ENCODE measurements at regions of chr12 and their contacts with region 1.

Region 1: GRCh38 chr12:57517187-57517586 is 3.1 kb downstream of the DDIT3 start:
- DNase-seq: no peak
- H3K4me3 Mint-ChIP-seq: no peak overlapping the region
- H3K27ac Mint-ChIP-seq: peak overlapping the region; percentile 60
- H3K4me1 Mint-ChIP-seq: peaks cover 38% of the 10 kb centered on the region
- H3K27me3 Mint-ChIP-seq: no peaks in the 10 kb centered on the region

Region 2: GRCh38 chr12:57498132-57498502 is 19.1 kb before region 1 on chr12:
- CTCF ChIA-PET with region 1: interaction called, 16 read pairs
- POLR2A ChIA-PET with region 1: no interaction called
- DNase-seq: no peak
- H3K4me3 Mint-ChIP-seq: no peak overlapping the region
- H3K27ac Mint-ChIP-seq: no peak overlapping the region
- H3K4me1 Mint-ChIP-seq: no peaks in the 10 kb centered on the region
- H3K27me3 Mint-ChIP-seq: no peaks in the 10 kb centered on the region

Measured in activated CD4-positive, alpha-beta T cell treated with anti-CD3 and anti-CD28 coated beads, Interleukin-2, amount 10 ng/mL, durations not matched to agents 7 days and 5 days (primary cell).